CD4-positive, alpha-beta memory T cell (primary cell): ENCODE measurements at regions of chr7 and their contacts with region 1.

Region 1: GRCh38 chr7:26061688-26062150 is 90.3 kb upstream of the NFE2L3 start:
- DNase-seq: peak; percentile 50 to 71 (median 61)
- H3K4me3 ChIP-seq: no peak overlapping the region
- H3K4me3 Mint-ChIP-seq: peak overlapping the region in 1 of 8 donors; percentile 20
- H3K27ac ChIP-seq: no peak overlapping the region
- H3K27ac Mint-ChIP-seq: no peak overlapping the region
- H3K4me1 ChIP-seq: no peaks in the 10 kb centered on the region
- H3K4me1 Mint-ChIP-seq: peaks cover 2 to 5% (median 3%) of the 10 kb centered on the region in 4 donors
- H3K27me3 ChIP-seq: no peaks in the 10 kb centered on the region
- H3K27me3 Mint-ChIP-seq: peaks cover 23 to 24% of the 10 kb centered on the region in 2 donors

Region 2: DNA sequence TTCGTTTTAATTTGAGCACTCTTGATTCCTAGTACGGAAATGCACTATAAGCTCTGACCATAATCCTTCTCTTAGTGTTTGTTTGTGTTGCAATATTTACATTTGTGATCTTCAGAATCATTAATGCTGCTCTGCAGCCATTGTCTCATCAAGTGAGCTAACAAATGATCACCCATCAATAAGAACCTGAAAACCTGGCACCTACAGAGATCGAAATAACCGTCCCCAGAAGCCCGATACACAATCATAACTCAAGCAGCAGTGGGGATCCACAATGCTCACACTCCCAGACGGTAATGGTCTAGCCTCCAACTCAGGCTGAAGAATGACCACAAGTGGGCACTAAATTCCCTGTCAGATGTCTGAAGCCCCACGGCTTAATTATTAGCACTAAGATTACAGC is 65.7 kb before region 1 on chr7:
- CTCF ChIA-PET with region 1: no interaction called
- POLR2A ChIA-PET with region 1: no interaction called
- intact Hi-C with region 1: no loop called
- DNase-seq: no peak
- H3K4me3 ChIP-seq: no peak overlapping the region
- H3K4me3 Mint-ChIP-seq: no peak overlapping the region
- H3K27ac ChIP-seq: no peak overlapping the region
- H3K27ac Mint-ChIP-seq: no peak overlapping the region
- H3K4me1 ChIP-seq: no peaks in the 10 kb centered on the region
- H3K4me1 Mint-ChIP-seq: peaks cover 2 to 9% (median 4%) of the 10 kb centered on the region in 4 donors
- H3K27me3 ChIP-seq: no peaks in the 10 kb centered on the region
- H3K27me3 Mint-ChIP-seq: peaks cover 4 to 5% of the 10 kb centered on the region in 2 donors

Region 3: DNA sequence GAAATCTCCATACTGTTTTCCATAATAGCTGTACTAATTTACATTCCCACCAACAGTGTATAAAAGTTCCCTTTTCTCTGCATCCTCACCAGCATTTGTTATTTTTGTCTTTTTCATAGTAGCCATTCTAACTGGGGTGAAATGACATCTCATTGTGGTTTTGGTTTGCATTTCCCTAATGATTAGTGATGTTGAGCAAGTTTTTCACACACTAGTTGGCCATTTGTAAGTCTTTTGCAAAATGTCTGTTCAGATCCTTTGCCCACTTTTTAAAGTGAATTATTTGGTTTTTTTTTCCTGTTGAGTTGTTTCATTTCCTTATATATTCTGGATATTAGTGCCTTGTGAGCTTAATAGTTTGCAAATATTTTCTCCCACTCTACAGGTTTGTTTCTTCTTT is 10.7 kb before region 1 on chr7:
- CTCF ChIA-PET with region 1: interaction called, 11 read pairs
- POLR2A ChIA-PET with region 1: no interaction called
- intact Hi-C with region 1: no loop called
- DNase-seq: no peak
- H3K4me3 ChIP-seq: no peak overlapping the region
- H3K4me3 Mint-ChIP-seq: no peak overlapping the region
- H3K27ac ChIP-seq: no peak overlapping the region
- H3K27ac Mint-ChIP-seq: no peak overlapping the region
- H3K4me1 ChIP-seq: no peaks in the 10 kb centered on the region
- H3K4me1 Mint-ChIP-seq: no peaks in the 10 kb centered on the region
- H3K27me3 ChIP-seq: no peaks in the 10 kb centered on the region
- H3K27me3 Mint-ChIP-seq: peaks cover 25 to 33% of the 10 kb centered on the region in 2 donors

Region 4: DNA sequence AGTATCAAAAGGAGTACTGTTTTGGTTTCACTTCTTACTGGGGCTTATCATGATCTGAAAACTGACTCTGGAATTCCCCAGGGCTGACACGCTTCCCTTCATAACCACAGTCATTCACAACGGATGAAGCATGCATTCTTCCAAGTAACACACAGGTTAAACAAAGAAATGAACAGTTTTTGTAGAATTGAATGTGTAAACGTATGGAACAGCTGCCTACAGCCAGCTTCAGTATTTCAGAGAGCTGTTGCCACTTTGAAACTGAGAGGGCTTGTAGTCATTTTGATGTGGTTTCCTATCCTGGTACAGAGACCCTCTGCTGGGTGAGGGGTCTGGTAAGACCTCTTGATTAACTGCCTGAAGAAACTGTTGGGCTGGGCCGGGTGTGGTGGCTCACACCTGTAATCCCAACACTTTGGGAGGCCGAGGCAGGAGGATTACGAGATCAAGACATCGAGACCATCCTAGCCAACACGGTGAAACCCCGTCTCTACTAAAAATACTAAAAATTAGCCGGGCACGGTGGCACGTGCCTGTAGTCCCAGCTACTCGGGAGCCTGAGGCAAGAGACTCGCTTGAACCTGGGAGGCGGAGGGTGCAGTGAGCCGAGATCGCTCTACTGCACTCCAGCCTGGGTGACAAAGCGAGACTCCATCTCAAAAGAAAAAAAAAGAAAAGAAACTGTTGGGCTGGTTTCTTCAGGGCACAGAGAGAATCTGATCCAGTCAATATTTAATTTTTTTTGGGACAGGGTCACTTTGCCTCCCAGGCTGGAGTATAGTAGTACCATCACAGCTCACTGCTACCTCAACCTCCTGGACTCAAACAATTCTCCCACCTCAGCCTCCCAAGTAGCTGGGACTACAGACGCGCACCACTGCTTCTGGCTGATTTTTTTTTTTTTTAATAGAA is 95.0 kb after region 1 on chr7:
- CTCF ChIA-PET with region 1: no interaction called
- POLR2A ChIA-PET with region 1: no interaction called
- intact Hi-C with region 1: no loop called
- DNase-seq: peak; percentile 67 to 87 (median 72)
- H3K4me3 ChIP-seq: peak overlapping the region; percentile 8 to 42
- H3K4me3 Mint-ChIP-seq: peak overlapping the region; percentile 62 to 98 (median 83)
- H3K27ac ChIP-seq: peak overlapping the region; percentile 79
- H3K27ac Mint-ChIP-seq: peak overlapping the region; percentile 94 to 98 (median 96)
- H3K4me1 ChIP-seq: peaks cover 69% of the 10 kb centered on the region
- H3K4me1 Mint-ChIP-seq: peaks cover 59 to 78% (median 69%) of the 10 kb centered on the region in 4 donors
- H3K27me3 ChIP-seq: no peaks in the 10 kb centered on the region
- H3K27me3 Mint-ChIP-seq: no peaks in the 10 kb centered on the region